Heart right ventricle (tissue), 16 donors: ENCODE measurements at regions of chr1 and their contacts with region 1.

Region 1: GRCh38 chr1:186325239-186325638 is 49.8 kb downstream of the TPR start:
- DNase-seq: no peak
- ATAC-seq: no peak
- H3K4me3 ChIP-seq: no peak overlapping the region
- H3K27ac ChIP-seq: no peak overlapping the region
- H3K4me1 ChIP-seq: no peaks in the 10 kb centered on the region
- H3K27me3 ChIP-seq: no peaks in the 10 kb centered on the region
- CTCF ChIP-seq: peak in 3 of 9 donors; percentile 19 to 38 (median 33)

Region 2: DNA sequence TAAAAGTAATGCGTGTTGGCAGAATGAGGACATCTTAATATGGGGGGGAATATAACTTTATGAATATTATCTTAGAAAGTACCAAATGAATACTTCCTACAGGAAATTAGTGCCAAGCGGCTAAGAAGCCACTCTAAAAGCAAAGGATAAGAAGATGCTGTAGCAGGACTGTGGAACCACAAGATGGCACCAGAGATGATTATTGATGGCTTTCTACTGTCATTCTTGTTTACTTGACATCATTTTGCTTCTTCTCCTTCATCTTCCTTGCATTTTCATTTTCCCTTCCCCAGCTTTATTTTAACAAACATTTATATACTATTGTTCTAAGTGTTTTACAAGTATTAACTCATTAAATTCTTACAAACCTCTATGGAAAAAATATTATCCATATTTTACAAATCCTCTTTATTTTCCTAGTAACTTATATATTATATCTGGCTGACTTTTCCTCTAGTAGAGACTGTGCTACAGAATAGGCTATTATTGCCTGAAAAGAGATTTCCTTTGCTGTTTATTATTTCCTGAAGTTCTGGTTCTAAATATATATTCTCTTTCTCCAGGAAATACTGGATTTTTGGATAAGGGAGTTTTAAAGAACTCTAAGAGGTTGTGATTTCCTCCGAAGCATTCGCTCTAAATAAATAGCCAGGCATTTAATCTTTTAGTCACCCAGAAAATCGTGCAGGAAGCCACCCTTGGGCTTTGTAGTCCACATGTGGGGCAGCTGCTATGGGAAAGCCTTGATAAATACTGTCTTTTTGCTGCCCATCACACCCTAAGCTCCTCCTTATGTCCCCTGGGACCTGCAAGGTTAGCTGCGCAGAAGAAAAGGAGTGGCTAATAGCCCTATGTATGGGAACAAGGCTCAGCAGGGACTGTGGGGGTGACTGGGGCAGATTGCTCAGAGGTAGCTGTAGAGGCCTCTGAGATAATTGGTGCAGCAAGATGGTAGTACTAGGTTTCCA is 20.0 kb before region 1 on chr1:
- intact Hi-C with region 1: no loop called
- DNase-seq: no peak
- ATAC-seq: peak in 2 of 8 donors; percentile 52 to 57
- H3K4me3 ChIP-seq: no peak overlapping the region
- H3K27ac ChIP-seq: peak overlapping the region in 2 of 10 donors; percentile 1 to 14
- H3K4me1 ChIP-seq: peaks cover 0 to 11% (median 0%) of the 10 kb centered on the region in 9 donors
- H3K27me3 ChIP-seq: no peaks in the 10 kb centered on the region
- CTCF ChIP-seq: peak in 7 of 9 donors; percentile 30 to 58 (median 44)

Region 3: DNA sequence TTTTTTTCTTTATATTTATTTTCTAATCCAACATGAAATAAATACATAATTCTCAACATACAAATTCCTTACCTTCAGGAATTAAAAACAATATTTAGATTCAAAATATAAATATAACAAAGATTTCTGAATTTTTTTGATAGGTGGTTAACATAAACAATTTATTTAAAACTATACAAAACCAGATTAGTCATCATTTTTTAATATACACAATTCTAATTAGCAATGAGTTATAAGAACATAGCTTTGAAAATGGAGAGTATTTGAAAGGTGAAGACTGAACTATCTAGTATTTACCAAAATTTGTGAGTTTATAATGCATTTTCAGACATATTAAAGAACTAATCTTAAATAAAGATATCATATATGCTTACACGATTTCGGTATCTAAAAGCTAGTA is 12.3 kb after region 1 on chr1:
- intact Hi-C with region 1: loop called in 1 of 10 experiments (anchors 2 kb)
- DNase-seq: no peak
- ATAC-seq: no peak
- H3K4me3 ChIP-seq: no peak overlapping the region
- H3K27ac ChIP-seq: no peak overlapping the region
- H3K4me1 ChIP-seq: no peaks in the 10 kb centered on the region
- H3K27me3 ChIP-seq: no peaks in the 10 kb centered on the region
- CTCF ChIP-seq: no peak

Region 4: DNA sequence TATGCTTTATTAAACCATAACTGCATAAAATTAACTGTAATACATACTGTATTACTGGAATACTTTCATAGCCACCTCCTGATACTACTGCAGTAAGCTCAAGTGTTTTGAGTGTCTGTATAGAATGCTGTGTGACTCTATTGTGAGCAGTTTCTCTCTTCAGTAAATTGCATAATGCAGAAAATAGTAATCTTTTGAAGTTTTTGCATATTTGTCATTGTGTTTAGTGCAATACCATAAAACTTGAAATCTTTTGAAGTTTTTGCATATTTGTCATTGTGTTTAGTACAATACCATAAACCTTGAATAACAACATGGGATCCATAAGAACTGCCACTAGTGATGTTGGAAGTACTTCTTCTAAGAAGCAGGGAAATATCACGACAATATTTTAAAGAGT is 38.7 kb after region 1 on chr1:
- intact Hi-C with region 1: loop called in 1 of 10 experiments (anchors 5 kb)
- DNase-seq: no peak
- ATAC-seq: no peak
- H3K4me3 ChIP-seq: no peak overlapping the region
- H3K27ac ChIP-seq: no peak overlapping the region
- H3K4me1 ChIP-seq: peaks cover 0 to 6% (median 0%) of the 10 kb centered on the region in 9 donors
- H3K27me3 ChIP-seq: no peaks in the 10 kb centered on the region
- CTCF ChIP-seq: no peak

Region 5: DNA sequence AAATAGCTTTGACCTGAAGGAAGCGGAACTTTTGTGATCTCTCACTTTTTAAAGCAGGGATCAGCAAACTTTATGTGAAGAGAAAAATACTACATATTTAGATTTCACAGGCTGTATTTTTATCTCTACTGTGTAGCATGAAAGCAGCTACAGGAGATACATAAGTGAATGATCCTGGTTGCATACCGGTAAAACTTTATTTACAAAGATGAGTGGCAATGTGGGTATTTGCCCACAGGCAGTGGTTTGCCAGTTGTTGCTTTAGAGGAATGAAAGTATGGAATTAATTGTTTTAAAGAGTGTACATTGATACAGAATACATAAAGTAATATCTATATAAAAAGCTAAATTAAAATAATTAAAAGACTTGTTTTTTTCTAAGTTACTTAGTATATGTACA is 68.2 kb after region 1 on chr1:
- intact Hi-C with region 1: loop called in 1 of 10 experiments (anchors 10 kb)
- DNase-seq: no peak
- ATAC-seq: no peak
- H3K4me3 ChIP-seq: no peak overlapping the region
- H3K27ac ChIP-seq: no peak overlapping the region
- H3K4me1 ChIP-seq: no peaks in the 10 kb centered on the region
- H3K27me3 ChIP-seq: no peaks in the 10 kb centered on the region
- CTCF ChIP-seq: no peak